ENCODE measurements at regions of chr3 and their contacts with region 1.

Region 1: GRCh38 chr3:182792901-182793662 is at the start of gene ATP11B:
- DNase-seq: peak; percentile 95
- H3K4me3 Mint-ChIP-seq: peak within 1 kb of the TSS; percentile 98
- H3K27ac Mint-ChIP-seq: peak within 1 kb of the TSS; percentile 99
- H3K4me1 Mint-ChIP-seq: peaks cover 31% of the 10 kb centered on the region
- H3K27me3 Mint-ChIP-seq: peaks cover 2% of the 10 kb centered on the region
- total RNA-seq, gene ATP11B: 87.9 and 89.7 TPM in 2 replicates

Region 2: GRCh38 chr3:182583545-182583944 is 209.5 kb before region 1 on chr3:
- intact Hi-C with region 1: no loop called
- DNase-seq: no peak
- H3K4me3 Mint-ChIP-seq: no peak overlapping the region
- H3K27ac Mint-ChIP-seq: no peak overlapping the region
- H3K4me1 Mint-ChIP-seq: no peaks in the 10 kb centered on the region
- H3K27me3 Mint-ChIP-seq: peaks cover 2% of the 10 kb centered on the region

Region 3: DNA sequence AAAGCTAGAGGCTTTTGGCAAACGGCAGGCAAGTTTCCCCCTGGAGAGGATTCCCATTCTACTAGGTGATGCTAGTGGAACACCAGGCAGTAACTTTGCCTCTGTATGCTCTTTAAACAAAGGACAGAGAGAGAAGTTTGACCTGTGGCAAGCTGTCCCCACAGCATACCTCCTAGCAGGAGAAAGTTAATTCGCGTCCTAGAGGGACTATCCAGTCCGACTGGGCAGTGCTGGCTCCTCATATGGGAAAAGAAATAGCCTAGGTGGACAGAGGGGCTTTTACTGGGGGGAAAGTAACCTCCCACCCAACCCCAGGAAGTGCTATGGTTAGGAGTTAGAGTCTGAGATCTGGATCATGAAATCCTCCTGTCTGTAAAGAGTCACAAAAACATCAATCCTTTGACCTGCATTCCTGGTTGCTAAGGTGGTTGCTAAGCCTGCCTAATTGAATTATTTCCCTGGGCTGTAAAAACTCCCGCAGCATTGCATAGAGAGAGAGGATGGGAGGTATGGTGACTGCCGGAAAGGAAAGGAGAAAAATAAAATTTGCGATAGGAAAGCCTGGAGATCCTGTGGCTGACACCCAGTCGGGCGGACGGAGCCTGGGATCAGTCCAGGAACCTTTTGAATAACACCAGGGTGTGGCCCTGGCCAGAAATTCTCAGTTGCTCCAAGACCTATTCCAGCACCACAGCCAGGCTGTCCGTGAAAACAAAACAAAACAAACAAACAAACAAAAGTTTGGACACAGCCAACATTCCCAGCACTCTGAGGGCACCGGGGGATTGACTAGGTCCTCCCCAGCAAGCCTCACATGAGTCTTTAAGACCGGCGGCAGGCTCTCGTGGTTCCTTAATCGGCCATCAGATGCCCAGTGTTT is 67.5 kb before region 1 on chr3:
- intact Hi-C with region 1: no loop called
- DNase-seq: no peak
- H3K4me3 Mint-ChIP-seq: no peak overlapping the region
- H3K27ac Mint-ChIP-seq: no peak overlapping the region
- H3K4me1 Mint-ChIP-seq: peaks cover 8% of the 10 kb centered on the region
- H3K27me3 Mint-ChIP-seq: peaks cover 6% of the 10 kb centered on the region

Region 4: GRCh38 chr3:182837855-182838454 is 44.9 kb after region 1 on chr3:
- intact Hi-C with region 1: loop called (anchors 2 kb)
- DNase-seq: no peak
- H3K4me3 Mint-ChIP-seq: no peak overlapping the region
- H3K27ac Mint-ChIP-seq: no peak overlapping the region
- H3K4me1 Mint-ChIP-seq: peaks cover 6% of the 10 kb centered on the region
- H3K27me3 Mint-ChIP-seq: no peaks in the 10 kb centered on the region

Region 5: DNA sequence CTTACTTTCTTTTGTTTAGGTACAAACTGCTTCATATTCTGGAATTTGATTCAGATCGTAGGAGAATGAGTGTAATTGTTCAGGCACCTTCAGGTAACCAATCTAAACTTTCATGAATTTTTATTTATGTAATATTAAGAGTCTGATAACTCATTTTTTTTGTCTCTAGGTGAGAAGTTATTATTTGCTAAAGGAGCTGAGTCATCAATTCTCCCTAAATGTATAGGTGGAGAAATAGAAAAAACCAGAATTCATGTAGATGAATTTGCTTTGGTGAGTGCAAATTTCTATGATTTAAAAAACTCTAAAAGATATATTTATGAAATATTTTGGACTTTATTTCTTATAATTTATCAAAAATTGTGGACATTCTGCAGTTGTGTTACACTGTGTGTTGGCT is 76.0 kb after region 1 on chr3:
- intact Hi-C with region 1: no loop called
- DNase-seq: no peak
- H3K4me3 Mint-ChIP-seq: no peak overlapping the region
- H3K27ac Mint-ChIP-seq: no peak overlapping the region
- H3K4me1 Mint-ChIP-seq: peaks cover 2% of the 10 kb centered on the region
- H3K27me3 Mint-ChIP-seq: no peaks in the 10 kb centered on the region

Region 6: DNA sequence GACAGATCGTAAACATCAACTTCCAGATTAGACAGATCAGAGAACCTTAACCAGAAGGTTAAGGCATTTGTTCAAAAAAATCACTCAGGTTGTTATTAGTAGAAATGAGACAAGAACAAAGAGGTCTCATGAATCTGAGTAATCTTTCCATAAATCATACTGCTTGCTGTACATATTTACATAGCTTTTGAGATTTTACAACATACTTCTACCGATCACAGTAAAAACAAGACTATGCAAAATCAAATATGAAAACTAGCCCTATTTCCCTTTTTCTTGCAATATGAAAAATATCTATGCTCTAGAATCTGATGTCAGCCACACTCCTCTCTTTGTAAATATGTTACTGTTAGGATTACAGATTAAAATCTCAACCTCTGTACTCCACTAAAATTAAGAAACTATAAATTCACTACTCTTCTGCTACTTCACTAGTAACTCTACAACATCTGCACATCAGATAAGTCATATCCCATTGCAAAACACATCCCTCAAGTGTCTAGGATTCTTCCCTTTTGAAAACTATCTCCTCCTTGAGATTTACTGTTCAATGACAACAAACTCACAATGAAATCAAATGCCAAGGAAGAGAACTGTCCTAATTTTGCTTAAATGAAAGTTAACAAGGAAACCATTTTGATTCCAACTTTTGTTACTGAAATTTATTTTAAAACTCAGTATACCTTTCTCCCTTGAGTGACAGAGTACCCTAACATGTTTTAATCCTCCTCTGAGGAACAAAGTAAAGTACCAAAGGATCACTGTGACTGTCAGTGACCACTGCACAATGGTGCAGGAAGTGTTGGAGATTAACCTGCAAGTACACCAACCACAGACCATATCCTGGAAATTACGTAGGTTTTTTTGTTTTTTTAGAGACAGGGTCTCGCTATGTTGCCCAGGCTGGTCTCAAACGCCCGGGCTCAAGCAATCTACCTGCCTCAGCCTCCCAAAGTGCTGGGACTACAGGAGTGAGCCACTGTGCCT is 174.4 kb after region 1 on chr3:
- intact Hi-C with region 1: loop called (anchors 5 kb)
- DNase-seq: peak; percentile 74
- H3K4me3 Mint-ChIP-seq: peak overlapping the region; percentile 34
- H3K27ac Mint-ChIP-seq: peak overlapping the region; percentile 84
- H3K4me1 Mint-ChIP-seq: peaks cover 42% of the 10 kb centered on the region
- H3K27me3 Mint-ChIP-seq: no peaks in the 10 kb centered on the region

Region 7: DNA sequence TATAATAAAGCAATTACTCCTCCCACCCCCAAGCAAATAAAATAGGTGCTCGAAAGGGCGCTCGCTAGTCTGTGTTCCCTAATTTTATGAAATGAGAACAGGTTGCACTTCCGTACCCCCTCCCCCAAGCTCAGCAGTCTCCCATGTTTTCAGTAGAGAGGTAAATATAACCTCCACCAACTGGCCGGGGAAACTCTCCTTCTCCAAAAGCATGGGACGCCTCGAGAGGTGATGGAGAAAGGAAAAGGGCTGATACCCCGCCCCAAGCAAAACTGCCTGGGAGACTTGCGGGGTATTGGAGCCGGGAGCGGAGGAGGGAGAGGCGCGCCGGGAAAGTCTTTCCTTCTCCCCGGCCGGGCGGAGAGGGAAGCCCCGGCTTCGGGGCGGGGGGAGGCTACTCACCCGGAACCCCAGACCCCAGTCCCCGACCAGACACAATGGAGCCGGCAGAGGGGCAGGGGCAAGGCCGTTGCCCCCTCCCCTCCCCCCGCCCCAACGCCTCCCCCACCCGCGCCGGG is 186.7 kb after region 1 on chr3:
- intact Hi-C with region 1: loop called (anchors 5 kb)
- DNase-seq: peak; percentile 77
- H3K4me3 Mint-ChIP-seq: peak overlapping the region; percentile 97
- H3K27ac Mint-ChIP-seq: peak overlapping the region; percentile 88
- H3K4me1 Mint-ChIP-seq: peaks cover 27% of the 10 kb centered on the region
- H3K27me3 Mint-ChIP-seq: no peaks in the 10 kb centered on the region

Region 8: DNA sequence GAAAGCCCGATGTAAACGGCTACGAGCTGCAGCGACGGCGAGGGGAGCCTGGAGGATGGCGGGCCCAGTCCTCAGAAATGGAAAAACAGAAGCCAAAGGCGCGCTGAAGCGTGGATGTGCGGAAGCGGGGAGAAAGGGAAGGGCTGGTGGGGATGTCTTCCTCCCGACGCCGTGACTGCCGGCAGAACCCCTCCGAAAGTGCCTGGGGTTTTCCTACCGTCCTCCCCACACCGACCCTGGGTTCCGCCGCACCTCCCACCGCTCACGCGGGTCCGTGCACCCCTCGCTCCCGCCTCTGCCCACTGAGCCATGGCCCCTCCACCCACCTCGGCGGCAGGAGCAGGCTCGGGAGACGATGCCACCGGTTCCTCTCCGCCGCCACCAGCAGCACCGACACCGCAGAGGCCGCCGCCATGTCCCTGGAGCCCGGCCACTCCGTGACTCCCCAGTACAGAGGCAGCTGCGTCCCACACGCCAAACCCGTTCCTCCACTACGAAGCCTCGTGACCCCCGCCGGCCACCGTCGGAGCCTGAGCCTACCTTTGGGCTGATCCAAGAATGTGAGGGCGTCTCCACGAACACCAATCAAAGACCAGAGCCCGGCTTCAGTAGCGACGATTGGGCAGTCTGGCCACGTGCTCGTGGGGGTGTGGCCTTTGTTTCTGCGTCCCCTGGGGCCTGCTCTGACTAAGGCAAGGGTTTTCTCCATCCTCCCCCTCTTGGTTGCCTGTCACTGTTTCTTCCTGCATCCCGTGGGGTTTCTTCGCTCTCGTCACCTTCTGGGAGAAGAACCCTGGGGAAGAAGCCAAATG is 306.1 kb after region 1 on chr3 and contains the start of gene MCCC1:
- intact Hi-C with region 1: loop called (anchors 2 kb)
- DNase-seq: peak; percentile 99
- H3K4me3 Mint-ChIP-seq: peak within 1 kb of the TSS; percentile 97
- H3K27ac Mint-ChIP-seq: peak within 1 kb of the TSS; percentile 97
- H3K4me1 Mint-ChIP-seq: peaks cover 26% of the 10 kb centered on the region
- H3K27me3 Mint-ChIP-seq: no peaks in the 10 kb centered on the region
- total RNA-seq, gene MCCC1: 25.4 and 27.5 TPM in 2 replicates

Region 9: GRCh38 chr3:183158551-183159006 is 365.5 kb after region 1 on chr3:
- intact Hi-C with region 1: loop called (anchors 5 kb)
- DNase-seq: peak; percentile 71
- H3K4me3 Mint-ChIP-seq: peak overlapping the region; percentile 44
- H3K27ac Mint-ChIP-seq: peak overlapping the region; percentile 81
- H3K4me1 Mint-ChIP-seq: peaks cover 39% of the 10 kb centered on the region
- H3K27me3 Mint-ChIP-seq: no peaks in the 10 kb centered on the region

Measured in activated CD4-positive, alpha-beta T cell treated with anti-CD3 and anti-CD28 coated beads, Interleukin-2, amount 10 ng/mL, durations not matched to agents 24 days and 14 days (primary cell).